ENCODE measurements at regions of chr3 and their contacts with region 1.

Region 1: DNA sequence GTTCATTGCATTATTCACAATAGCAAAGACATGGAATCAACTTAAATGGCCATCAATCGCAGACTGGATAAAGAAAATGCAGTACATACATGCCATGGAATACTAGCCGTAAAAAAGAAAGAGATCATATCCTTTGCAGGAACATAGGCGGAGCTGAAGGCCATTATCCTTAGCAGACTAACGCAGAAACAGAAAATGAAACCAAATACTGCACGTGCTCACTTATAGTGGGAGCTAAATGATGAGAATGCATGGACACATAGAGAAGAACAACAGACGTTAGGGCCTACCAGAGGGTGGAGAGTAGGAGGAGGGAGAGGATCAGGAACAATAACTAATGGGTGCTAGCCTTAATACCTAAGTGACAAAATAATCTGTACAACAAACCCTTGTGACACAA is 57.9 kb downstream of the RASA2 start:
- DNase-seq: peak in 4 of 14 experiments; percentile 8 to 84 (median 70)
- ATAC-seq: peak; percentile 91
- H3K4me3 ChIP-seq: peak overlapping the region; percentile 17
- H3K4me3 Mint-ChIP-seq: peak overlapping the region; percentile 74
- H3K27ac ChIP-seq: peak overlapping the region; percentile 40
- H3K27ac Mint-ChIP-seq: peak overlapping the region; percentile 82
- H3K4me1 ChIP-seq: no peaks in the 10 kb centered on the region
- H3K4me1 Mint-ChIP-seq: peaks cover 89% of the 10 kb centered on the region
- H3K27me3 ChIP-seq: no peaks in the 10 kb centered on the region
- H3K27me3 Mint-ChIP-seq: no peaks in the 10 kb centered on the region
- CTCF ChIP-seq: no peak

Region 2: GRCh38 chr3:141000027-141000663 is 544.6 kb before region 1 on chr3:
- CTCF ChIA-PET with region 1: no interaction called
- POLR2A ChIA-PET with region 1: no interaction called
- intact Hi-C with region 1: no loop called
- DNase-seq: peak; percentile 8 to 70 (median 36)
- ATAC-seq: peak; percentile 86
- H3K4me3 ChIP-seq: no peak overlapping the region
- H3K4me3 Mint-ChIP-seq: no peak overlapping the region
- H3K27ac ChIP-seq: no peak overlapping the region
- H3K27ac Mint-ChIP-seq: no peak overlapping the region
- H3K4me1 ChIP-seq: no peaks in the 10 kb centered on the region
- H3K4me1 Mint-ChIP-seq: no peaks in the 10 kb centered on the region
- H3K27me3 ChIP-seq: no peaks in the 10 kb centered on the region
- H3K27me3 Mint-ChIP-seq: no peaks in the 10 kb centered on the region
- CTCF ChIP-seq: peak; percentile 50

Region 3: DNA sequence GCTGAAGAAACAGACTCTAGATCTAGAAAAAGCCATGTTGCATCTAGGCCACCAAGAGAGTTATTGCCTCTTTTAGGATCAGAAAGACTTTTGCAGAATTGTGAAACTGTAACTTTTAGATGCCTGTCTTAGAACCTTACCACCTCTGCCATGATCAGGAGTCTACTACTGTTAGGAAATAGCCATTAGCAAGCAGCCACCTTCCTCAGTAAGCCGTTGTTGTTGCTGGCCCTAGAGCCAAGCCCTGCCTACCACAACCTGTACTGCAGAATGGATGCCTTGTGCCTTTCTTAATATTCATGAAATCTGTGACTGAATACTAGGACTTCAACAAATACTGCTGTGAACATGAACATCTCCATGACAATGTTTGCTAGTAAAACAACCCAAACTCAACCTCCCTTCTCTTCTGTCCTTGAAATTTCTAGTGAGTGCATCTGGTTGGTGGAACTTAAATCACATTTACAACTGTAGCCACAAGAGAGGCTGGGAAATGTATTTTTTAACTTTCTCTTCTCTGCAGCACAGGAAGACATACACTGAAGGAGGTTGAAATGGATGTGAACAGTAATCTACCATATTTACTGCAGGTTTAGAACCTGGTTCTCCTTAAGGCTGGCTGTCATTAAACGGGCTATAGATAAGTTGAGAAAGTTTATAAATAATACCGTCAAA is 37.2 kb before region 1 on chr3:
- CTCF ChIA-PET with region 1: no interaction called
- POLR2A ChIA-PET with region 1: interaction called, 6 read pairs
- intact Hi-C with region 1: loop called in 1 of 2 experiments (anchors 5 kb)
- DNase-seq: no peak
- ATAC-seq: peak; percentile 59
- H3K4me3 ChIP-seq: no peak overlapping the region
- H3K4me3 Mint-ChIP-seq: peak overlapping the region; percentile 11
- H3K27ac ChIP-seq: no peak overlapping the region
- H3K27ac Mint-ChIP-seq: peak overlapping the region; percentile 67
- H3K4me1 ChIP-seq: peaks cover 30% of the 10 kb centered on the region
- H3K4me1 Mint-ChIP-seq: peaks cover 57% of the 10 kb centered on the region
- H3K27me3 ChIP-seq: no peaks in the 10 kb centered on the region
- H3K27me3 Mint-ChIP-seq: no peaks in the 10 kb centered on the region
- CTCF ChIP-seq: no peak

Region 4: DNA sequence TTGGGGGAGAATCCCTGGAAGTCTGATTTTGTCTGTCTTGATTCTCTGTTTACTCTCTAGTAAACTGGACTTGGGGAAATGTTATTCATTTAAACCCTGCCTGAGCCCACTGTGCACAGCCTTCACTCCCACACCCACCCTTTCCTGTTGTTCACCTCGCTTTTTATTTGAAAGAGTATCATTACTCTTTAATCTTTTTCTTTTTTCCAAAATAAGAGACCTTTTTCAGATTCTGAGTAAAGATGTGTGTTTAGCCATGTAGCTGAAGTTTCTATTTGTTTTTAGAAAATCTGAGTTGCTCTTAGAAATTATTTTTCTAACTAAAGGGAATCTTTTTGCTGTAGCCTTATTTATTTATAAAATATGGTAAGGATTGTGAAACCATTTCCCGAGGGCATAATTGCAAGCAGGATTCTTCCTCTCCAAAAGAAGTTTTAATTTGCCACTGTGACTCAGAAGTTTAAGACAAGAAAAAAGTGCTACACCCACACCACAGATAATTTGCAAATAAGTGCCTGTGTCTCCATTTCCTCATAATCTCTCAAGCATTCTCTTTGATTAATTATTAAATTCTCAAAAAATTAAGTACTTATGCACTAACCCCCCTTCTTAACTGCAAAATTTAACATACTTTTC is 14.4 kb before region 1 on chr3:
- CTCF ChIA-PET with region 1: interaction called, 3 read pairs
- POLR2A ChIA-PET with region 1: interaction called, 13 read pairs
- intact Hi-C with region 1: loop called in 1 of 2 experiments (anchors 2 kb)
- DNase-seq: peak in 8 of 14 experiments; percentile 6 to 71 (median 24)
- ATAC-seq: peak; percentile 81
- H3K4me3 ChIP-seq: peak overlapping the region; percentile 13
- H3K4me3 Mint-ChIP-seq: peak overlapping the region; percentile 86
- H3K27ac ChIP-seq: peak overlapping the region; percentile 51 to 64
- H3K27ac Mint-ChIP-seq: peak overlapping the region; percentile 94
- H3K4me1 ChIP-seq: peaks cover 8% of the 10 kb centered on the region
- H3K4me1 Mint-ChIP-seq: peaks cover 83% of the 10 kb centered on the region
- H3K27me3 ChIP-seq: no peaks in the 10 kb centered on the region
- H3K27me3 Mint-ChIP-seq: no peaks in the 10 kb centered on the region
- CTCF ChIP-seq: no peak

Measured in CD4-positive, alpha-beta T cell (primary cell).